ENCODE measurements at regions of chr19 and their contacts with region 1.

Region 1: DNA sequence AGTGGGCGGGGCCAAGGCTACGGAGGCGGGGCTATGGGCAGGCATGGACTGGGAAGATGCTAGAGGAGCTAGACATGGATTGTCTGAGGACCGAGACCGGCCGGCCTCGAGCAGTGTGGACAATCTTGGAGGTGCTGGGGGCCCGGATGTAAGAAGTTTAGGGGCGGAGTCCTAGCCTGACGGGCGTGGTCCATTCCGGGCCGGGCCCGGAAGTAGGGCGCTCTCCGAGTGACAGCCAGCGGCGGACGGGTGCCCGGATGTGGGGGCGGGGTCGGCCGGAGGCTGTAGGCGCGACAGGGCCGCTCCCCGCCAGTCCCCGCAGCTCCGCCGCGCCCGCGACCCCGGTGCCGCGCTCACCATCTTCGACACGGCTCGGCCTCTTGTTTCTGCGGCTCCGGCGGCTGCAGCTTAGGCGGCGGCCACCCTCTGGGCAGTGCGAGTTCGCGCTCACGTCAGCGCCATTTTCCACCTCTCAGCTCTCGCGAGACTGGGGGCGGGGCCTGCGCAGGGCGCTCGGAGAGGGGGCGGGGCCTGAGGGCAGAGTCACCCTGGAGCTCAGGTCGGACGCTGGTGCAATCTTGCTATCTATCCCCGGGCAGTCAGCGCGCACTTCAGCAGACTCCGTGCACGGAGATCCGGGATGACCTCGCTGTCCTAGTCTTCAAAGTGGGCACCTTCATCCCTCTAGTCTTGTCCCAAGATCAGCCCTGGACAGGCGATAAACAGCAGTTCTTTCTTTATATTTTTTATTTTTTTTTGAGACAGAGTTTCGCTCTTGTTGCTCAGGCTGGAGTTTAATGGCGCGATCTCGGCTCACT is at the start of gene ZNF414:
- DNase-seq: peak; percentile 98
- H3K4me3 Mint-ChIP-seq: peak within 1 kb of the TSS; percentile 94
- H3K27ac Mint-ChIP-seq: peak within 1 kb of the TSS; percentile 100
- H3K4me1 Mint-ChIP-seq: peaks cover 38% of the 10 kb centered on the region
- H3K27me3 Mint-ChIP-seq: no peaks in the 10 kb centered on the region
- total RNA-seq, gene ZNF414: 18.1 and 25.6 TPM in 2 replicates

Region 2: DNA sequence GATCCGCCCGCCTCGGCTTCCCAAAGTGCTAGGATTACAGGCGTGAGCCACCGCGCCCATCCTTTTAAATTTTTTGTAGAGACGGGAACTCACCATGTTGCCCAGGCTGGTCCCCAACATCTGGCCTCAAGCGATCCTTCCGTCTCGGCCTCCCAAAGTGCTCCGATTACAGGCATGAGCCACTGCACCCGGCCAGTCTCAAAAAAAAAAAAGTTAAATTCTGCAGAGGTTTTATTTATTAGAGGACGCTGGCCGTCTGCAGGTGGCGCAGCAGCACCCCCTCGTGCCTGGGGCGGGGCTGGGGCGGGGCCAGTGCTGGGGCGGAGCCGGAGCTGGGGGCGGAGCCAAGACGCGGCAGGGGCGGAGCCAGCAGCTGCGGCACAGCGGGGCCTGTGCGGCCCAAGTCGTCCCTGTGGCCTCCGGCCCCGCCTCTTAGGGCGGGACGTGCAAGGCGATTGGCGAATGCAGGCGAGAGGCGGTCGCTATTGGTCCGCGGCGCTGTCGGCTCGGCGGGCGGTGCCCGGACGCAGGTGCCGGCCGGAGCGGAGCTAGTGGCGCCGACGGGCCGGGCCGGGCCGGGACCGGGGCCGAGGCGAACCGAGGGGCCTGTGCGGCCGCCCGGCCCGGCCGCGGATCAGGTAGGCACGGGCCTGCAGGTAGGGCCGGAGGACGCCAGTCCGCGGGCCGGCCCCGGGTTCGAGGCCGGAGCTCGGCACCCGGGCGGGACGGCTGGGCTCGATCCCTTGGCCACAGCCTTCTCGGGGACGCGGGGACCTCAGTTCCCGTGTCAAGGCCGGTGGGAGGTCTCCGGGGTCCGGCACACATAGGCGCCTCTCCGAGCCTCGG is 100.9 kb before region 1 on chr19 and contains the start of gene MARCHF2:
- intact Hi-C with region 1: loop called (anchors 1 kb)
- DNase-seq: peak; percentile 99
- H3K4me3 Mint-ChIP-seq: peak within 1 kb of the TSS; percentile 52
- H3K27ac Mint-ChIP-seq: peak within 1 kb of the TSS; percentile 29
- H3K4me1 Mint-ChIP-seq: peaks cover 8% of the 10 kb centered on the region
- H3K27me3 Mint-ChIP-seq: no peaks in the 10 kb centered on the region
- total RNA-seq, gene MARCHF2: 7.9 and 8.8 TPM in 2 replicates

Region 3: DNA sequence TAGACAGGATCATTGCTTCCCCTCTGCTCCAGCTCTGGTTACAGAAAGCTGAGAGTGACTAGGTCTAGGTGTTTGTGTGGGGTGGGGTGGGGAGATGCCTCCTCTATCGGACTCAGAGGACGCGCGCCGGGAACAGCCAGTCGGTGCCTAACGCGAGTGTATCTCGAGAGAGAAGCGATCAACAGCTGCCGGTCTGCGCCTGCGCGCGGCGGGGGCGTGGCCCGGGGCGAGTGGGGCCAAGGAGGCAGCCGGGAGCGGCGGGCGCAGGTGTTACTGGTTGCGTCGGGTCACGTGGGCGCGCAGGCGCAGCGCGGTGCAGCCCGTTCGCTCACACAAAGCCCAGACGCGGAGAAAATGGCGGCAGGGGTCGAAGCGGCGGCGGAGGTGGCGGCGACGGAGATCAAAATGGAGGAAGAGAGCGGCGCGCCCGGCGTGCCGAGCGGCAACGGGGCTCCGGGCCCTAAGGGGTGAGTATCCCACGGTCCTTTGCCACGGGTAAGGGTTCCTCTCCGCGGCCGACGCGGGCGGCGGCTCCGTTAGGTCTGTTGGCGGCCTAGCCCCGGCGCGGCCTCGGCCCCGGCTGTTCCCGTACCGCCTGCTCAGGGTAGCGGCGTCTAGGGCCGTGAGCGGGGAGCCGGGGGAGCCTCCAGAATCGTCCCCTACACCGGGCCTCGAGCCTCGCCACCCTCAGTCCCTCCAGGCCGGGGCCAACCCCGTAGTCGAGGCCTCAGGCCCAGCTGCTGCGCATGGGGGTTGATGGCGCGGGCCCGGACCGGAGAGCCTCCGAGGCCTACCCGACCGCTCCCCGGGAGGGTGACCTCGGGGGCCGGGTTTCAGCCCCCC is 69.0 kb before region 1 on chr19 and contains the start of gene HNRNPM:
- intact Hi-C with region 1: loop called (anchors 2 kb)
- DNase-seq: peak; percentile 100
- H3K4me3 Mint-ChIP-seq: peak within 1 kb of the TSS; percentile 96
- H3K27ac Mint-ChIP-seq: peak within 1 kb of the TSS; percentile 99
- H3K4me1 Mint-ChIP-seq: peaks cover 25% of the 10 kb centered on the region
- H3K27me3 Mint-ChIP-seq: no peaks in the 10 kb centered on the region
- total RNA-seq, gene HNRNPM: 349 and 352 TPM in 2 replicates

Region 4: DNA sequence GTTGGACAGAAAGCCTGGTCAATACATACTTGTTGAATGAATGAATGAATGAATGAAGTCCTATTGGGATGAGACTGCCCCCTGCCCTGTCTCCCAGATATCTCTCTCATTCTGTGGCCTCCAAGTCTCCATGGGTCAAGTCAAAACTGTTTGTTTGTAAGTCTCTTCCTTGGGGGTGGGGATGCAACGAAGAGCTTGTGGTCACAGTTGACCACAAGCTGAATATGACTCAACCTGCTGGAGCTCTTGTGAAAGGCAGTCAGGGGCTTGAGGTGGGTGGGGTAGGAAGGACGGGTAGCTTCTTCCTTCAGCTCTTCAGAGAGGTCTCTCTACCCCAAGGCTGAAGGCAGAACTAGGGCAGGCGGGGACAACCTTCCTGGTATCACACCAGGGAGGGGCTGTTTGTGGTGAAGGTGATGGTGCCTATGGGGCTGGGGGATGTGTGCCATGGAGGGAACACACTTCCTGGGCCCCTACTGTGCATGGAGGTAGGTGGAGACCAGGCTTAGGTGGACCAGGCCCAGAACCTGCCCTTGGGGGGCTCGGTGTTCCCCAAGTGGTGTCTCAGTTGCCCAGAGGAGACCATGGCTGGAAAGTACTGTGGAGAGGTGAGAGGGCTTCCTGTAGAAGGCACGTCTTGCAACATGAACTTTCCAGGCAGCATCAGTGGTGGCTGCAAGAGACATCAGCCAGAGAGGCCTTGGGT is 55.3 kb after region 1 on chr19:
- intact Hi-C with region 1: loop called (anchors 2 kb)
- DNase-seq: peak; percentile 93
- H3K4me3 Mint-ChIP-seq: peak overlapping the region; percentile 83
- H3K27ac Mint-ChIP-seq: peak overlapping the region; percentile 94
- H3K4me1 Mint-ChIP-seq: peaks cover 63% of the 10 kb centered on the region
- H3K27me3 Mint-ChIP-seq: peaks cover 2% of the 10 kb centered on the region